Activated B cell treated with CpG ODN at 0.5 μM for 24 hours (primary cell): ENCODE measurements at regions of chr15 and their contacts with region 1.

Region 1: DNA sequence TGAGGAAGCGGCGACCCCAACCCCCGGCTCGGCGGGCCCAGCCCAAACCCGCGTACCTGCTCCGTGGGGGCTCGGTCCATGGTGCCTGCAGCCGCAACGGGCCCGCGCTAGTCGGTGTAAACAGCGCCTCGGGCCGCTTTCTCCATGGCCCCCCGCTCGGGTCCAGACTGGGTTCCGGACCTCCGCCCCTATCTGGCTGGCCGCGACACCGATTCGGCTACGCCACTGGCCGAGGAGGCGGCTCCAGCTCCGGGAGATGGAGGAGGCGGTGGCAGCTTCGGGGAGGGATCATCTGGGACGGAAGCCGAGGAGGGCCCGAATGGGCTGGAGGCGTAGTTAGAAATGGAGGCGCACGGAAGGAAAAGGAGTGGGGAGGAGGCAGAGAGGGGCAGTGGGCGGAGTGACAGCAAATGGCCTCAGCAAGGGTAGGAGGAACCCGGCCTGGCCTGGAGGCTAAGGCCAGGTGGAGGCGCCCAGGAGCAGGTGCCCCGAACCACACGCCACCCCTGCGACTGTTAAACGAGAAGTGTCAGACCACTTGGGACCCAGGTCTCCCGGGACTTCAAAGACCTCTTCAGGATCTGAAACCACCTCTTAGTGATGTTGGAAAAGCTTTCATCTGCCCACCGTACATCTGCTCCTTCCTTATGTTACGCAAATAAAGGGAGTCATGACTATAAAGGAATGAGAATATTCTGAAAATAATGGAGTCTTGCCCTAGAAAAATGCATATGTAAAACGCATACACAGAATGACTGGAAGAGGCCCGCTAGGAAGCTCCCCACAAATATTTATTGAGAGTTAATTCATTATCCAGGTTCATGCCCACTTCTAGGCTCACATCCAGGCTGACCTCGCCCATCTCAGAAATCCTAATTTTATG is at the start of gene SECISBP2L:
- DNase-seq: peak; percentile 82
- ATAC-seq: peak; percentile 97
- H3K4me3 Mint-ChIP-seq: peak within 1 kb of the TSS; percentile 97
- H3K27ac Mint-ChIP-seq: peak within 1 kb of the TSS; percentile 95
- H3K4me1 Mint-ChIP-seq: peaks cover 36% of the 10 kb centered on the region
- H3K27me3 Mint-ChIP-seq: no peaks in the 10 kb centered on the region
- CTCF ChIP-seq: no peak
- total RNA-seq, gene SECISBP2L: 52.6 and 56.5 TPM in 2 replicates

Region 2: GRCh38 chr15:48330855-48331795 is 715.3 kb before region 1 on chr15 and contains the start of gene DUT:
- CTCF ChIA-PET with region 1: no interaction called
- POLR2A ChIA-PET with region 1: no interaction called
- intact Hi-C with region 1: loop called (anchors 1 kb)
- DNase-seq: peak; percentile 72
- ATAC-seq: peak; percentile 79
- H3K4me3 Mint-ChIP-seq: peak within 1 kb of the TSS; percentile 98
- H3K27ac Mint-ChIP-seq: peak within 1 kb of the TSS; percentile 97
- H3K4me1 Mint-ChIP-seq: peaks cover 28% of the 10 kb centered on the region
- H3K27me3 Mint-ChIP-seq: no peaks in the 10 kb centered on the region
- CTCF ChIP-seq: no peak
- total RNA-seq, gene DUT: 75.7 and 81.6 TPM in 2 replicates

Region 3: DNA sequence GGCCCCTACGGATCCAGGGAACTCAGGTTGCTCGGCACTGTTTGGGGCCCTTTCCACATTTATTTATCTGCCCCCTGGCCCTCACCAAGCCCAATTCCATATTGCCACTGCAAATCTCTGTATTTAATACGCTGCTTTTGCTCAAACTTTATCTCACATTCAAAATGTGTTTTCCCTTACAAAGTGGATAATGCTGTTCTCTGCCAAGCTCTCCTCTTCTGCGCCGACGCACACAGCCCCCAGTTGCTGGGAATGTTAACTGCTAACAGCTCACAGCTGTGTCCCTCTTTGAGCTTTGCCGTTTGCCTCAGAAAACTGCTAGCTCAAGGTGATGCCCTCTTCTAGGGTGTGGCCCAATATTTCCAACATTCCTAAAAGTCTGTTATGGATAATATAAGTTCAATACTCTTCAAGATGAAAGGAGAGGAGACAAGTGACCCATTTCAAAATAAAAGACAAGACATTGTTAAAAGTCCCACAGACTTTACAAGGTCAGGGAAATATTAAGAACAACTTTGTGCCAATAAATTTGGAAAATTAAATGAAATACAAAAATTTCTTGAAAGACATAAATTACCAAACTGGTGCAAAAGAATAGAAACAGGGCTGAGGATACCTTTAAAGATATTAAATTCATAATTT is 388.4 kb before region 1 on chr15:
- CTCF ChIA-PET with region 1: no interaction called
- POLR2A ChIA-PET with region 1: no interaction called
- intact Hi-C with region 1: no loop called
- DNase-seq: no peak
- ATAC-seq: no peak
- H3K4me3 Mint-ChIP-seq: no peak overlapping the region
- H3K27ac Mint-ChIP-seq: no peak overlapping the region
- H3K4me1 Mint-ChIP-seq: no peaks in the 10 kb centered on the region
- H3K27me3 Mint-ChIP-seq: peaks cover 2% of the 10 kb centered on the region
- CTCF ChIP-seq: no peak

Region 4: GRCh38 chr15:48877630-48878595 is 168.5 kb before region 1 on chr15 and contains the start of gene EID1:
- CTCF ChIA-PET with region 1: no interaction called
- POLR2A ChIA-PET with region 1: interaction called, 9 read pairs
- intact Hi-C with region 1: loop called (anchors 1 kb)
- DNase-seq: peak; percentile 90
- ATAC-seq: peak; percentile 95
- H3K4me3 Mint-ChIP-seq: peak within 1 kb of the TSS; percentile 99
- H3K27ac Mint-ChIP-seq: peak within 1 kb of the TSS; percentile 97
- H3K4me1 Mint-ChIP-seq: peaks cover 27% of the 10 kb centered on the region
- H3K27me3 Mint-ChIP-seq: peaks cover 3% of the 10 kb centered on the region
- CTCF ChIP-seq: no peak
- total RNA-seq, gene EID1: 51.3 and 54.4 TPM in 2 replicates

Region 5: GRCh38 chr15:49155110-49155833 is 108.8 kb after region 1 on chr15 and contains the start of gene COPS2:
- CTCF ChIA-PET with region 1: interaction called, 3 read pairs
- POLR2A ChIA-PET with region 1: interaction called, 18 read pairs
- intact Hi-C with region 1: loop called (anchors 1 kb)
- DNase-seq: peak; percentile 78
- ATAC-seq: peak; percentile 93
- H3K4me3 Mint-ChIP-seq: peak within 1 kb of the TSS; percentile 95
- H3K27ac Mint-ChIP-seq: peak within 1 kb of the TSS; percentile 95
- H3K4me1 Mint-ChIP-seq: peaks cover 43% of the 10 kb centered on the region
- H3K27me3 Mint-ChIP-seq: no peaks in the 10 kb centered on the region
- CTCF ChIP-seq: no peak
- total RNA-seq, gene COPS2: 53.1 and 54.4 TPM in 2 replicates

Region 6: DNA sequence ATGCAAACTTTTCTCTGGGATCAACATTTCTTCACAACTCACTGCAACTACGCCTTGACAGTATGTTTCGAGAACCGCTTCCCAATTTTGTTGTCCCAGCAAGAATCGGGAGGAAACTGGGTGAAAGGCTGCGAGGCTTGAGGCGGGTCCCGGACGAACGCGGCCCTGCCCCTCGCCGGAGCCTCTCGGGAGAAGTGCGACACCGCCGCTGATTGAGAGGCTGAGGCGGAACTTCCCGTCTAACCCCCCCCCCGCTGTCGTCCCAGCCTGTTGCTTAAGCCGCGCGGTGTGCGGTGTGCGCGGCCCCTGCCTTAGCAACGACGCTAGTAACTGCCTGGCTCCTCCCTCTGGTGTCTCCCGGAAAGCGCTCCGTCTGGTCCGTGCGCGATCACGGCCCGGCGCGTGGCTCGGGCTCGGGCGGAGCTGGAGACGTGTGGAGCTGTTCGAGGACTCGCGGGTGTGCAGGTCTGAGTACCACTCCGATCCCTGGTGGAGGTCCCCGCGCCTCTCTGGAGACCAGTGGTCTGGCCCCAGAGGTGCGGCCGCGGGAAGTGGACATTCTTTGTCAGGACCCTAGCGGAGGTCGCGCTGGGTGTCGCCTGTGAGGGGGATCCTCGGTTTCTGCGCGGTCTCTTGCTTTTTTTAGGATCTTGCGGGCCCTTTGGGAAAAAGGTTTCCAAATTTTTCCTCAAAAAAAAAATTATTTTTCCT is 574.4 kb after region 1 on chr15 and contains the starts of genes DTWD1 and FAM227B:
- CTCF ChIA-PET with region 1: interaction called, 3 read pairs
- POLR2A ChIA-PET with region 1: no interaction called
- intact Hi-C with region 1: loop called (anchors 1 kb)
- DNase-seq: peak; percentile 90
- ATAC-seq: peak; percentile 96
- H3K4me3 Mint-ChIP-seq: peak within 1 kb of the TSS; percentile 96
- H3K27ac Mint-ChIP-seq: peak within 1 kb of the TSS; percentile 96
- H3K4me1 Mint-ChIP-seq: peaks cover 31% of the 10 kb centered on the region
- H3K27me3 Mint-ChIP-seq: no peaks in the 10 kb centered on the region
- CTCF ChIP-seq: no peak
- total RNA-seq, gene DTWD1: 20.5 and 21.4 TPM in 2 replicates
- total RNA-seq, gene FAM227B: 4.3 and 4.5 TPM in 2 replicates